ENCODE measurements at regions of chr7 and their contacts with region 1.

Region 1: DNA sequence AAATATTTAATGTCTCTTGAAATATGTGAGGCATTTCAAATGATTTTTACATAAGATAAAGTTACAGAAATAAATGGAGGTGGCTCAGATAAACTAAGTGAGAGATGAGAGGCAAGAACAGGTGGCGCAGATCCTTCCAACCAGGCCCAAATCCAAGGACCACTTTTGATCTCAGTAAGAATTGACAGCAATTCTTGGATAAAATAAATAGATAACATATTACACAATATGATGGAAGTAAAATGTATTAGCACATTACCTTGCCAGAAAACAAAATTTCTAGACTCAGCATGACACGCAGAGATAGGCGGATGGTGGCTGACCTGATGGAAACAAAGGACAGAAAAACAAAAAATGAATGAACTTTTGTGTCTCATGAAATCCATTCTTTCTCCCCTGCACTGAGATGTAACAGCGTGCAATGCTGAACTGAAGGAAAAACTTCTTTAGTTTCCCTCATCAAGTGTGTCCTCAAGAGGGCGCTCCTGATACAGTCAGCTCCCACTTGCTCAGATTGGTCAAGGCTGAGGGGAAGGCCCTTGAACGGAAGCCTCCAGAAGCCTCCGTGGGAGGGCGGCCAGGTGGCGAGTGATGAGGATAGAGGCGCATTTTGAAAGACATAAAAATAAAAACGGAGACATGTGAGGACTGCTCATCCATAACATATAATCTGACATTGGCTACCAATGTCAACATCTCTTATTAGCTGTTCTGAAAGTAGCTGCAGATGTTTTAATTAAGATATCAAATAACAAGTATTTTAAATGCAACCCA is 62.8 kb upstream of the GSDME start:
- DNase-seq: peak; percentile 81 to 95 (median 85)
- H3K4me3 ChIP-seq: no peak overlapping the region
- H3K27ac ChIP-seq: no peak overlapping the region
- H3K4me1 ChIP-seq: no peaks in the 10 kb centered on the region
- H3K27me3 ChIP-seq: no peaks in the 10 kb centered on the region
- CTCF ChIP-seq: peak; percentile 89

Region 2: DNA sequence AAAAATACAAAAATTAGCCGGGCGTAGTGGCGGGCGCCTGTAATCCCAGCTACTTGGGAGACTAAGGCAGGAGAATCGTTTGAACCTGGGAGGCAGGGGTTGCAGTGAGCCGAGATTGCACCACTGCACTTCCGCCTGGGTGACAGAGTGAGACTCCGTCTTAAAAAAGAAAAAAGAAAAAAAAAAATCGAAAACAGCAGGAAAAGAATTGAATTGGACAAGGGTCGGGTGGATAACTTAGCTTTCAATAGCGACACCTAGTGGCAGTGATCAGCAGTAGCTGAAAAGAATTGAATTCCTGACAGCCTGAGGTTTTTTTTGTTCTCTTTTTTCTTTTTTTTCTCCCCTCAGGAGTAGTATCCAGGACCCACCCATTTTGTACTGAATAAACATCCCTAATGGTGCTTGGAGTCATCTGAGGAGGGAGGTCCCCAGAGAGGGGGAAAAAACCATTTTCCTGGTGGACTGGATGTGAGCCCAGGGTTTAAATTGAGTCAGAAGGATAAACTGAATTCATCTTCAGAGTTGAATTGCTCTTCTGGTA is 249.9 kb after region 1 on chr7:
- intact Hi-C with region 1: loop called (anchors 5 kb)
- DNase-seq: peak in 4 of 5 donors; percentile 65 to 91 (median 75)
- H3K4me3 ChIP-seq: peak overlapping the region in 1 of 3 donors; percentile 49
- H3K27ac ChIP-seq: no peak overlapping the region
- H3K4me1 ChIP-seq: no peaks in the 10 kb centered on the region
- H3K27me3 ChIP-seq: no peaks in the 10 kb centered on the region
- CTCF ChIP-seq: peak; percentile 93

Region 3: DNA sequence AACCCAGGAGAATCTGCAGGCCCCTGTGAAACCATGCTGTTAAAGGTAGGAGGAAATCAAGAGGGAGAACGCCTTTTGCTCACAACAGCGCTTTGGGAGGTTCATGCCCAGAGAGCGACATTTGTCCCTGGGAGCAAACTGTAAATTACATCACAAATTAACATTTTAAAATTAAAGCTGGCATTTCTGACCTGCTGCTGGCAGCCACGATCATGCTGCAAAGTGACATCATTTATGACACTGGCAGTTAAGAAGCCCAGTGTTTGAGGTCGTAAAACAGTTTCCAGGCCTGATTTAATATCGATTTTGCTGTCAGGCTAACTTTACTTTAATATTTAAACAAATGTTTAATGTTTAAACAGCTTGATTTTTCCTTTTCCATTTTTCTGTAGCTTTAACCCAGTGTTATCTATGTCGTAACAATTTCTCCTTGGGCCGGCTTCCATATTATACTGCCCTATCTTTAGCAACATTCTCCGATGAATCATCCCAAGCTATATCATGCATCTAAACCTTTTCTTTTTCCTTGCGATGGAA is 494.7 kb after region 1 on chr7:
- intact Hi-C with region 1: no loop called
- DNase-seq: no peak
- H3K4me3 ChIP-seq: no peak overlapping the region
- H3K27ac ChIP-seq: no peak overlapping the region
- H3K4me1 ChIP-seq: no peaks in the 10 kb centered on the region
- H3K27me3 ChIP-seq: no peaks in the 10 kb centered on the region
- CTCF ChIP-seq: no peak

Measured in kidney (tissue), 22 donors.